Activated naive CD4-positive, alpha-beta T cell treated with anti-CD3 and anti-CD28 coated beads for 36 hours (primary cell): ENCODE measurements at regions of chr3 and their contacts with region 1.

Region 1: GRCh38 chr3:50298836-50299637 is at the starts of genes HYAL3 and NAA80:
- DNase-seq: peak; percentile 100
- H3K4me3 Mint-ChIP-seq: peak within 1 kb of the TSS; percentile 99
- H3K27ac Mint-ChIP-seq: peak within 1 kb of the TSS; percentile 97
- H3K4me1 Mint-ChIP-seq: peaks cover 25% of the 10 kb centered on the region
- H3K27me3 Mint-ChIP-seq: no peaks in the 10 kb centered on the region
- total RNA-seq, gene HYAL3: 0.74 to 0.88 TPM
- total RNA-seq, gene NAA80: 7.9 to 10.5 TPM

Region 2: GRCh38 chr3:50235716-50236496 is 63.1 kb before region 1 on chr3 and contains the start of gene GNAI2:
- CTCF ChIA-PET with region 1: no interaction called
- intact Hi-C with region 1: loop called (anchors 1 kb)
- DNase-seq: peak; percentile 99
- H3K4me3 Mint-ChIP-seq: peak within 1 kb of the TSS; percentile 95
- H3K27ac Mint-ChIP-seq: peak within 1 kb of the TSS; percentile 92
- H3K4me1 Mint-ChIP-seq: peaks cover 33% of the 10 kb centered on the region
- H3K27me3 Mint-ChIP-seq: no peaks in the 10 kb centered on the region
- total RNA-seq, gene GNAI2: 272 to 276 TPM

Region 3: GRCh38 chr3:50321336-50322114 is 22.5 kb after region 1 on chr3:
- CTCF ChIA-PET with region 1: interaction called, 15 read pairs
- intact Hi-C with region 1: loop called (anchors 1 kb)
- DNase-seq: peak; percentile 83
- H3K4me3 Mint-ChIP-seq: peak overlapping the region; percentile 86
- H3K27ac Mint-ChIP-seq: peak overlapping the region; percentile 80
- H3K4me1 Mint-ChIP-seq: peaks cover 38% of the 10 kb centered on the region
- H3K27me3 Mint-ChIP-seq: no peaks in the 10 kb centered on the region

Region 4: DNA sequence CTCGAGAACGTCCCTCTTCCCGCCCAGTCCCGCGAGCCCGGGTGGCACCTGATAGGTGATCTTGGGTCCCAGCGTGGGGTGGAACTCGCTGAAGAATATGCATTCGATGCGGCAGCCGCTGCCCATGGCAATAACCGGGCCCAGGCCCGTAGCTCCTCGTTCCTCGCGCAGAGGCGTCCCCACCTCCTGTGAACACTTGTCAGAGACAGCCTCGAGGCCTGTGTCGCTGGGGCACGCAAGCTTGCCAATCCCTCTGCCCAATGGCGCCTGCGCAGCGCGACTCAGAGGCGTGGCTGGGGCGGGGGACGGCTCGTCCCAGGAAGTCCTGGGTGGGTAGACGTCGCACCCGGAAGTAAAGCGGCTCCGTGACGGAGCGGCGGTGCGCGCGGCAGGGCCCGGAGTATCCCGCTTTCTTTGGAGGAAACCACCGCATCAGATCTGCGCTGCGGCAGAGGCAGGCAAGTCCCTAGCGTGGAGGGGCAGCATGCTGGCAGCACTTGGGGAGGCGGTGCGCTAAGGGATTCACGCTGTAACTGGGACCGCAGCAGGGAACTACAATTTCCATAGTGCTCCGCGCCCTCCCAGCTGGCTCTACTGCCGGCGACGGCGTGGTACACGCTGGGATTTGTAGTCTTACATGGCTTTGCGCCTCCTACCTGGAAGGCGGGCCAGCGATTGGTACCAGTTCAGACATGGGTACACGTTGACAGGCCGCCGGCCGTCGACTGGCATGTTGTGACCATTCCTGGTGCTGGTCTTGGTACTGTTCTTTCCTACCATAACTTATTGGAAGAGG is 51.7 kb after region 1 on chr3 and contains the starts of genes CYB561D2 and NPRL2:
- CTCF ChIA-PET with region 1: interaction called, 4 read pairs
- intact Hi-C with region 1: loop called (anchors 1 kb)
- DNase-seq: peak; percentile 99
- H3K4me3 Mint-ChIP-seq: peak within 1 kb of the TSS; percentile 97
- H3K27ac Mint-ChIP-seq: peak within 1 kb of the TSS; percentile 97
- H3K4me1 Mint-ChIP-seq: peaks cover 59% of the 10 kb centered on the region
- H3K27me3 Mint-ChIP-seq: no peaks in the 10 kb centered on the region
- total RNA-seq, gene CYB561D2: 11.0 to 11.3 TPM
- total RNA-seq, gene NPRL2: 27.7 to 31.3 TPM

Region 5: GRCh38 chr3:50587806-50588758 is 289.0 kb after region 1 on chr3:
- CTCF ChIA-PET with region 1: no interaction called
- intact Hi-C with region 1: loop called (anchors 1 kb)
- DNase-seq: peak; percentile 94
- H3K4me3 Mint-ChIP-seq: peak overlapping the region; percentile 42
- H3K27ac Mint-ChIP-seq: peak overlapping the region; percentile 99
- H3K4me1 Mint-ChIP-seq: peaks cover 91% of the 10 kb centered on the region
- H3K27me3 Mint-ChIP-seq: no peaks in the 10 kb centered on the region